Activated CD4-positive, alpha-beta T cell treated with anti-CD3 and anti-CD28 coated beads, Interleukin-2, amount 10 ng/mL, durations not matched to agents 7 days and 5 days (primary cell): ENCODE measurements at regions of chr13 and their contacts with region 1.

Region 1: GRCh38 chr13:24228852-24229458 is 68.4 kb downstream of the SPATA13 start:
- DNase-seq: peak; percentile 68
- H3K4me3 Mint-ChIP-seq: no peak overlapping the region
- H3K27ac Mint-ChIP-seq: no peak overlapping the region
- H3K4me1 Mint-ChIP-seq: peaks cover 24% of the 10 kb centered on the region
- H3K27me3 Mint-ChIP-seq: no peaks in the 10 kb centered on the region

Region 2: DNA sequence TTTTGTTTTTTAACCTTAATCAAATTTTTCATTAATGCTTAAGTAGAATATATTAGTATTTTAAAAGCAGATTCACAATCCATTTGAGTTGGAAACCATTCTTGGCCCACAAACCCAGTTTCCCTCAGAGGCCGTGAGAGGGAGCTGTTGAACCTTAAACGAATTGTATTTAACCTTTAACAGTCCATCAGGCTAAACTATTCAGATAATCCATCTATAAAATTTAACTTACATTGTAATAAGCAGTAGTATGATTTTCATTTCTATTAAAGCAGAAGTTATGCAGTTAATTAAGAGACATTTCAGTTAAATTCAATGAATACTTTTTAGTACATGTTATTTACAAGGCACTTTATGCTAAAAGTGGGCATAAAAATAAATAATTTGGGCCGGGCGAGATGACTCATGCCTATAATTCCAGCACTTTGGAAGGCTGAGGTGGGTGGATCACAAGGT is 208.6 kb before region 1 on chr13:
- CTCF ChIA-PET with region 1: interaction called, 11 read pairs
- POLR2A ChIA-PET with region 1: interaction called, 3 read pairs
- DNase-seq: peak; percentile 57
- H3K4me3 Mint-ChIP-seq: no peak overlapping the region
- H3K27ac Mint-ChIP-seq: no peak overlapping the region
- H3K4me1 Mint-ChIP-seq: peaks cover 6% of the 10 kb centered on the region
- H3K27me3 Mint-ChIP-seq: no peaks in the 10 kb centered on the region

Region 3: GRCh38 chr13:24107955-24108614 is 120.9 kb before region 1 on chr13:
- CTCF ChIA-PET with region 1: no interaction called
- POLR2A ChIA-PET with region 1: no interaction called
- DNase-seq: no peak
- H3K4me3 Mint-ChIP-seq: no peak overlapping the region
- H3K27ac Mint-ChIP-seq: no peak overlapping the region
- H3K4me1 Mint-ChIP-seq: no peaks in the 10 kb centered on the region
- H3K27me3 Mint-ChIP-seq: peaks cover 18% of the 10 kb centered on the region